GM12878 (cell line): ENCODE measurements at regions of chr1 and their contacts with region 1.

Region 1: GRCh38 chr1:64242895-64243756 is 39.7 kb downstream of the UBE2U start:
- DNase-seq: no peak
- ATAC-seq: peak; percentile 72
- H3K4me3 ChIP-seq: no peak overlapping the region
- H3K27ac ChIP-seq: no peak overlapping the region
- H3K4me1 ChIP-seq: no peaks in the 10 kb centered on the region
- H3K27me3 ChIP-seq: 0 out of 4 replicates have a peak, but pooled peaks cover 0 to 2% of the 10 kb centered on the region in 2 experiments
- CTCF ChIP-seq: peak in 2 of 3 experiments; percentile 11 to 48; a peak in 2 of 6 replicates
- EP300 ChIP-seq: no peak
- POLR2A ChIP-seq: no peak
- RAD21 ChIP-seq: peak; percentile 66

Region 2: GRCh38 chr1:63615768-63616420 is 627.2 kb before region 1 on chr1:
- CTCF ChIA-PET with region 1: interaction called, 9 read pairs
- POLR2A ChIA-PET with region 1: no interaction called
- RAD21 ChIA-PET with region 1: interaction called, 4 read pairs
- SMC1A ChIA-PET with region 1: interaction called, 5 read pairs
- in situ Hi-C with region 1: loop called (anchors 5 kb)
- intact Hi-C with region 1: loop called (anchors 2 kb)
- DNase-seq: peak; percentile 19
- ATAC-seq: peak; percentile 90
- H3K4me3 ChIP-seq: no peak overlapping the region
- H3K27ac ChIP-seq: no peak overlapping the region
- H3K4me1 ChIP-seq: no peaks in the 10 kb centered on the region
- H3K27me3 ChIP-seq: no peaks in the 10 kb centered on the region
- CTCF ChIP-seq: peak; percentile 57 to 79 (median 71); a peak in 5 of 6 replicates
- EP300 ChIP-seq: no peak
- POLR2A ChIP-seq: no peak
- RAD21 ChIP-seq: peak; percentile 76

Region 3: GRCh38 chr1:63683759-63684158 is 559.4 kb before region 1 on chr1:
- CTCF ChIA-PET with region 1: interaction called, 5 read pairs
- POLR2A ChIA-PET with region 1: no interaction called
- RAD21 ChIA-PET with region 1: no interaction called
- SMC1A ChIA-PET with region 1: interaction called, 3 read pairs
- in situ Hi-C with region 1: loop called (anchors 5 kb)
- intact Hi-C with region 1: no loop called
- DNase-seq: no peak
- ATAC-seq: no peak
- H3K4me3 ChIP-seq: no peak overlapping the region
- H3K27ac ChIP-seq: no peak overlapping the region
- H3K4me1 ChIP-seq: no peaks in the 10 kb centered on the region
- H3K27me3 ChIP-seq: no peaks in the 10 kb centered on the region
- CTCF ChIP-seq: no peak
- EP300 ChIP-seq: no peak
- POLR2A ChIP-seq: no peak
- RAD21 ChIP-seq: no peak

Region 4: GRCh38 chr1:63917571-63918417 is 325.3 kb before region 1 on chr1:
- CTCF ChIA-PET with region 1: interaction called, 16 read pairs
- POLR2A ChIA-PET with region 1: interaction called, 6 read pairs
- RAD21 ChIA-PET with region 1: interaction called, 9 read pairs
- SMC1A ChIA-PET with region 1: interaction called, 5 read pairs
- in situ Hi-C with region 1: no loop called
- intact Hi-C with region 1: loop called (anchors 2 kb)
- DNase-seq: no peak
- ATAC-seq: peak; percentile 76
- H3K4me3 ChIP-seq: no peak overlapping the region
- H3K27ac ChIP-seq: no peak overlapping the region
- H3K4me1 ChIP-seq: no peaks in the 10 kb centered on the region
- H3K27me3 ChIP-seq: no peaks in the 10 kb centered on the region; a peak in 1 of 4 replicates
- CTCF ChIP-seq: peak; percentile 21 to 55 (median 44); a peak in 4 of 6 replicates
- EP300 ChIP-seq: no peak
- POLR2A ChIP-seq: no peak
- RAD21 ChIP-seq: peak; percentile 41; the same call in 1 of the 2 replicates

Region 5: GRCh38 chr1:63935143-63935542 is 308.0 kb before region 1 on chr1:
- CTCF ChIA-PET with region 1: interaction called, 15 read pairs
- POLR2A ChIA-PET with region 1: no interaction called
- RAD21 ChIA-PET with region 1: interaction called, 4 read pairs
- SMC1A ChIA-PET with region 1: interaction called, 6 read pairs
- in situ Hi-C with region 1: no loop called
- intact Hi-C with region 1: no loop called
- DNase-seq: no peak
- ATAC-seq: peak; percentile 60
- H3K4me3 ChIP-seq: no peak overlapping the region
- H3K27ac ChIP-seq: no peak overlapping the region
- H3K4me1 ChIP-seq: no peaks in the 10 kb centered on the region
- H3K27me3 ChIP-seq: no peaks in the 10 kb centered on the region
- CTCF ChIP-seq: peak in 2 of 3 experiments; percentile 14 to 20; a peak in 2 of 6 replicates
- EP300 ChIP-seq: no peak
- POLR2A ChIP-seq: no peak
- RAD21 ChIP-seq: no peak

Region 6: GRCh38 chr1:64171797-64172281 is 71.3 kb before region 1 on chr1:
- CTCF ChIA-PET with region 1: no interaction called
- POLR2A ChIA-PET with region 1: no interaction called
- RAD21 ChIA-PET with region 1: no interaction called
- SMC1A ChIA-PET with region 1: interaction called, 4 read pairs
- in situ Hi-C with region 1: no loop called
- intact Hi-C with region 1: loop called (anchors 5 kb)
- DNase-seq: peak; percentile 21
- ATAC-seq: peak; percentile 94
- H3K4me3 ChIP-seq: no peak overlapping the region
- H3K27ac ChIP-seq: peak overlapping the region; percentile 54
- H3K4me1 ChIP-seq: peaks cover 14% of the 10 kb centered on the region
- H3K27me3 ChIP-seq: no peaks in the 10 kb centered on the region
- CTCF ChIP-seq: no peak
- EP300 ChIP-seq: no peak
- POLR2A ChIP-seq: no peak
- RAD21 ChIP-seq: no peak

Region 7: GRCh38 chr1:64766385-64766784 is 523.3 kb after region 1 on chr1:
- CTCF ChIA-PET with region 1: no interaction called
- POLR2A ChIA-PET with region 1: no interaction called
- RAD21 ChIA-PET with region 1: no interaction called
- SMC1A ChIA-PET with region 1: no interaction called
- in situ Hi-C with region 1: no loop called
- intact Hi-C with region 1: no loop called
- DNase-seq: no peak
- ATAC-seq: no peak
- H3K4me3 ChIP-seq: no peak overlapping the region
- H3K27ac ChIP-seq: no peak overlapping the region
- H3K4me1 ChIP-seq: no peaks in the 10 kb centered on the region
- H3K27me3 ChIP-seq: no peaks in the 10 kb centered on the region
- CTCF ChIP-seq: no peak
- EP300 ChIP-seq: no peak
- POLR2A ChIP-seq: no peak
- RAD21 ChIP-seq: no peak

Region 8: GRCh38 chr1:65174585-65174984 is 931.5 kb after region 1 on chr1:
- CTCF ChIA-PET with region 1: no interaction called
- POLR2A ChIA-PET with region 1: no interaction called
- RAD21 ChIA-PET with region 1: no interaction called
- SMC1A ChIA-PET with region 1: no interaction called
- in situ Hi-C with region 1: no loop called
- intact Hi-C with region 1: no loop called
- DNase-seq: peak; percentile 84
- ATAC-seq: peak; percentile 48
- H3K4me3 ChIP-seq: no peak overlapping the region
- H3K27ac ChIP-seq: no peak overlapping the region
- H3K4me1 ChIP-seq: peaks cover 24% of the 10 kb centered on the region
- H3K27me3 ChIP-seq: no peaks in the 10 kb centered on the region
- CTCF ChIP-seq: no peak
- EP300 ChIP-seq: peak in 1 of 2 experiments; percentile 47; a peak in 1 of 4 replicates
- POLR2A ChIP-seq: no peak
- RAD21 ChIP-seq: no peak